Aorta (tissue), 5 donors: ENCODE measurements at regions of chr4 and their contacts with region 1.

Region 1: GRCh38 chr4:139243448-139244365 is 36.3 kb downstream of the MGARP start:
- DNase-seq: peak in 1 of 2 donors; percentile 57
- ATAC-seq: peak; percentile 92
- H3K4me3 ChIP-seq: no peak overlapping the region
- H3K27ac ChIP-seq: peak overlapping the region in 1 of 2 donors; percentile 84
- H3K4me1 ChIP-seq: peaks cover 3% of the 10 kb centered on the region in 2 donors
- H3K27me3 ChIP-seq: no peaks in the 10 kb centered on the region

Region 2: DNA sequence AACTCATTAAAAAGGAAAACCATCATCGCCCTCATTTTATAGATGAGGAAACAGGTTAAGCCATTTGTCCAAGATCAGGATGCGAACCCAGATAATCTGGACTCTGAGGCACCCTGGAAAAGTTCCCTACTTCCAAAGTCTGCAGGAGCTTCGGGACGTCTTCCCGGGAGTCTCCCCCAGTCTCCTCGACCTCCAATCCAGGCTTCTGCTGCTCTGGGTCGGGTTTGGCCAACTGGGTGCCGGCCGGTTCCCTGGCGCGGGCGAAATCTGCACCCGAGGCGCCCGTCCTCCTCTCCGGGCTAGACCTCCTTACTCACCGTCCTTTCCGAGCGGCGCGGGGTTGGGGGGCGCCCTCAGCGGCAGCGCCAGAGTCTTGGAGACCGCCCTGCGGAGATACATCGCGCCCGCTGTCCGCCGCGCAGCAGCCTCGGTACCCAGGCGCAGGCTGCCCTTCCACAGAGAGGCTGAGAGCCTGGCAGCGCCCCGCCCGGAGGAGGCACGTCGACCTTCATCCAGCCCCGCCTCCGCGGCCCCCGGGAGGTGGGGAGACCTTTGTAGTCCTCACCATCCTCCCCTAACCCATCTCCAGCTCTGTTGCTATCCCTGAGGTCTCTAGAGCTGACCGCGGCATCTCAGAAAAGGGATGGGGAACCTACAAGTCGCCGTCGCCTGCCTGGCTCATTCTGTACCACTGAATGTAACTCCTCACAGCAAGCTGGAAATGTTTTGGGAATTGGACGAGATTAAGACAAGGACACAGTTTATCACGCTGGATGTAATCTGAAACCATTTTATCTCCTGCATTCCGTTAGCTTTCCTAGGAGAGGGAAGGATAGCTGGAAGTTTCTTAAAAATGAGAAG is 36.3 kb after region 1 on chr4 and contains the start of gene MGARP:
- intact Hi-C with region 1: loop called in 1 of 2 experiments (anchors 5 kb)
- DNase-seq: peak; percentile 58 to 83
- ATAC-seq: peak; percentile 89
- H3K4me3 ChIP-seq: peak within 1 kb of the TSS; percentile 56 to 76
- H3K27ac ChIP-seq: no peak within 1 kb of the TSS
- H3K4me1 ChIP-seq: peaks cover 0 to 5% of the 10 kb centered on the region in 2 donors
- H3K27me3 ChIP-seq: no peaks in the 10 kb centered on the region
- total RNA-seq, gene MGARP: 2.2 to 3.7 TPM